Activated T-helper 1 cell treated with anti-CD3 and anti-CD28 coated beads, Interleukin-12 subunit alpha, Interleukin-12 subunit beta, Interleukin-2, Interleukin-4 antibody, amounts not matched to agents 30 ng/mL and 10 ng/mL and 1 ng/mL, durations not matched to agents 14 hours and 24 hours and 36 hours (primary cell): ENCODE measurements at regions of chr2 and their contacts with region 1.

Region 1: DNA sequence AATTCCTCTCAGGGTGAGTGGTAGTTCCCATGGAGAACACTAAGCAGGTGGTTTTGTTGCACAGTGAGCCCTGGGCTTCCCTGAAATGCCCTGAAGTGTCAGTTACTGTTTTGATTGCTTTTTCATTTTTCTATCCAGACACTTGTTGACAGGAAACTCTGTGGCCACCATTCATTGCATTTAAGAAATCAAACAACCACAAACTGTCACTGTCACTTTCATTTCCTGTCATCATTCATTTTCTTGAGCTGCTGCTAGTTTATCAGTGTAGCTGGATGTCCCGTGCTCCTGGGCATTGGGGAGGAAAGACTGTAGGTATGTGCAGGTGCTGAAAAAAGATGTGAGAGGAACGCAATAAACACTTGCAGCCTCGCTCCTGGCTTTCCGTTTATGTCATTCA is 891.6 kb upstream of the ZEB2 start:
- DNase-seq: peak; percentile 31
- H3K4me3 Mint-ChIP-seq: peak overlapping the region; percentile 12
- H3K27ac Mint-ChIP-seq: peak overlapping the region; percentile 31
- H3K4me1 Mint-ChIP-seq: peaks cover 22% of the 10 kb centered on the region
- H3K27me3 Mint-ChIP-seq: peaks cover 38% of the 10 kb centered on the region

Region 2: GRCh38 chr2:145258903-145259579 is 152.5 kb before region 1 on chr2:
- intact Hi-C with region 1: loop called (anchors 1 kb)
- DNase-seq: peak; percentile 4
- H3K4me3 Mint-ChIP-seq: no peak overlapping the region
- H3K27ac Mint-ChIP-seq: no peak overlapping the region
- H3K4me1 Mint-ChIP-seq: peaks cover 18% of the 10 kb centered on the region
- H3K27me3 Mint-ChIP-seq: peaks cover 28% of the 10 kb centered on the region

Region 3: DNA sequence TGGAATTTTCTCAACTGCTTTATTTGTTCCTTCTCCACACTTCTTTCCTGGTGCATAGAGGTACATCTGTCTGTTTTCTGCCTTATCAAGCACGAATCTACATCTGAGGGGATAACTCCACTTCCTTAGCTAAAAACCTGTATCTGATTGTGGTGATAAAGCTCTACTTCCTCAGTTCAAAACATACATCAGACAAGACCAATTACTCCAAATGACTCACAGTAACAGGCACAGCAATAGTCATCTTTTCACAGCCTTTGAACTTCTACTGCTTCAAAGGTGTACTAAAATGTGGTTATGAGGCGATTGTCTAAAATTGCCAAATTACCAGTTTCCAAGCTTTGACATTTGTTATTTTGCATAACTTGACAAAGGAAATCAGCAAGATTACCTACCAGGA is 88.0 kb before region 1 on chr2:
- intact Hi-C with region 1: loop called (anchors 1 kb)
- DNase-seq: peak; percentile 2
- H3K4me3 Mint-ChIP-seq: peak overlapping the region; percentile 20
- H3K27ac Mint-ChIP-seq: peak overlapping the region; percentile 25
- H3K4me1 Mint-ChIP-seq: peaks cover 20% of the 10 kb centered on the region
- H3K27me3 Mint-ChIP-seq: peaks cover 7% of the 10 kb centered on the region

Region 4: GRCh38 chr2:145752091-145752806 is 340.8 kb after region 1 on chr2:
- intact Hi-C with region 1: loop called (anchors 5 kb)
- DNase-seq: no peak
- H3K4me3 Mint-ChIP-seq: no peak overlapping the region
- H3K27ac Mint-ChIP-seq: no peak overlapping the region
- H3K4me1 Mint-ChIP-seq: peaks cover 23% of the 10 kb centered on the region
- H3K27me3 Mint-ChIP-seq: peaks cover 8% of the 10 kb centered on the region